AG04450 (cell line): ENCODE measurements at regions of chr10 and their contacts with region 1.

Region 1: GRCh38 chr10:74213571-74214162 is 62.6 kb downstream of the ADK start:
- DNase-seq: no peak
- H3K4me3 ChIP-seq: no peak overlapping the region
- H3K27ac ChIP-seq: no peak overlapping the region
- H3K27me3 ChIP-seq: no peaks in the 10 kb centered on the region
- CTCF ChIP-seq: peak; percentile 65

Region 2: GRCh38 chr10:73879296-73880173 is 334.1 kb before region 1 on chr10:
- CTCF ChIA-PET with region 1: no interaction called
- POLR2A ChIA-PET with region 1: no interaction called
- DNase-seq: no peak
- H3K4me3 ChIP-seq: no peak overlapping the region
- H3K27ac ChIP-seq: no peak overlapping the region
- H3K27me3 ChIP-seq: no peaks in the 10 kb centered on the region
- CTCF ChIP-seq: peak; percentile 91

Region 3: DNA sequence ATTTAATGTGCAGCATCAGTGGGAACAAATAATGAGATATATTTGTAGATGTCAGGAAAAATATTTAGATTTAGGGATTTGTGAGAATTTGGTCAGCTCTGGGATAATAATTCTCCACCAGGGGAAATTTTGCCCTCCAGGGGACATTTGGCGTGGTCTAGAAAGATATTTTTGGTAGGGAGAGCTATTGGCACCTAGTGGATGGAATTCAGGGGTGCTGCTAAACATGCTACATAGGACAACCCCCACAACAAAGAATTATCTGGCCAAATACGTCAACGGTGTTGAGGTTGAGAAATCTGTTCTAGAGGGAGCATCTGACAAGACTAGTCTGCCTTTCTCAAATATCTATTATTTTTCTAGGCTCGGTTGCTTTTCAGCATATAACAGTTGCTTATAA is 60.5 kb before region 1 on chr10:
- CTCF ChIA-PET with region 1: interaction called, 10 read pairs
- POLR2A ChIA-PET with region 1: no interaction called
- DNase-seq: no peak
- H3K4me3 ChIP-seq: no peak overlapping the region
- H3K27ac ChIP-seq: no peak overlapping the region
- H3K27me3 ChIP-seq: no peaks in the 10 kb centered on the region
- CTCF ChIP-seq: peak; percentile 73

Region 4: DNA sequence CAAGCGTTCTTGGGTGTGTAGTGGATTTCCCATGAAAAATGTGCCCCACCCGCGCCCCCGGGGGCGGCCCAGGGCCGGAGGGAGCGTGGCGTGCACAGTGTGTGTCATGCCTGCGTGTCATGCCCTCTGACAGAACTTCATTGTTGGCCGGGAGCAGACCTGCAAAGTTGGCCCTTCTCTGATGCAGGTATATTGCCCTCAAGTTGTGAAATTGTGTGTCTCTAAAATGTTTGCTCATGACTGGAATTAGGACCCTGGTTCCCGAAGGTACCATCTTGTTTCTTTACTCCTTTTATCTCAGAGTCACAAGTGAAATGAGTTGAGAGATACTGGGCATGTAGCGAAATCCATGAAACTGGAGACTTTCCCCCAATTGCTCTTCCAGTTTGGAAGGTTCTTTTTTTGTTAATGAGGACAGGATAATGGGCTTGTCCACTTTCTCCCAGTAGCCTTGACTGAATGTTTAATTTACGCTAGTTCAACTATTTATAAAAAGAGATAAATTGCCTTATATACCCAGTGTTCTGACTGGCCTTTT is 36.5 kb before region 1 on chr10:
- CTCF ChIA-PET with region 1: interaction called, 11 read pairs
- POLR2A ChIA-PET with region 1: no interaction called
- DNase-seq: no peak
- H3K4me3 ChIP-seq: peak overlapping the region; percentile 99
- H3K27ac ChIP-seq: peak overlapping the region; percentile 83
- H3K27me3 ChIP-seq: no peaks in the 10 kb centered on the region
- CTCF ChIP-seq: no peak

Region 5: DNA sequence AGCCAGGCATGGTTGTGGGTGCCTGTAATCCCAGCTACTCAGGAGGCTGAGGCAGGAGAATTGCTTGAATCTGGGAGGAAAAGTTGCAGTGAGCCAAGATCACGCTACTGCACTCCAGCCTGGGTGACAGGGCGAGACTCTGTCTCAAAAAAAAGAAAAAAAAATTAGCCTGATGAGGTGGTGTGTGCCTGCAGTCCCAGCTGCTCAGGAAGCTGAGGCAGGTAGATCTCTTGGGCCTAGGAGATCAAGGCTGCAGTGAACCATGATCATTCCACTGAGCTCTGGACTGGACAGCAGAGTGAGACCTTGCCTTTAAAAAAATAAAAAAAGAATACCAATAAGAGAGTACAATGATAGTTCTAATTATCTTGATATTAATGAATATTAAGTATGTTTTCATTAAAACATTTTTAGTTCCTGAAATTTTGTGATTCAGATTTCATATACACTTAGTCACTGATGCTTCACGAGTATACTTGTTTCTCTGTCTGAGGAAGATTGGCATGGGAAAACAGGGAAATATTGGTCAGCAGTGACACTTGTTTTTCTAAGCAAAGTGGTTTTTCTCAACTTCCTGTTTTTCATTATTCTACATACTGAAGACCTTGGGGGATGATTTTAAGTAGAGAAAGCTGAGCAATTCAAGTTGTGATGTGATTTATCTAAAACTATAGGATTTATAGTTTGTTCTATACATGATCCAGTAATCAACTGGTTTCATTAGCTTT is 14.2 kb after region 1 on chr10:
- CTCF ChIA-PET with region 1: interaction called, 11 read pairs
- POLR2A ChIA-PET with region 1: no interaction called
- DNase-seq: no peak
- H3K4me3 ChIP-seq: no peak overlapping the region
- H3K27ac ChIP-seq: no peak overlapping the region
- H3K27me3 ChIP-seq: no peaks in the 10 kb centered on the region
- CTCF ChIP-seq: no peak

Region 6: GRCh38 chr10:74234569-74234968 is 20.9 kb after region 1 on chr10:
- CTCF ChIA-PET with region 1: interaction called, 18 read pairs
- POLR2A ChIA-PET with region 1: no interaction called
- DNase-seq: no peak
- H3K4me3 ChIP-seq: no peak overlapping the region
- H3K27ac ChIP-seq: no peak overlapping the region
- H3K27me3 ChIP-seq: no peaks in the 10 kb centered on the region
- CTCF ChIP-seq: peak; percentile 51

Region 7: GRCh38 chr10:74400186-74400585 is 186.5 kb after region 1 on chr10:
- CTCF ChIA-PET with region 1: no interaction called
- POLR2A ChIA-PET with region 1: no interaction called
- DNase-seq: no peak
- H3K4me3 ChIP-seq: no peak overlapping the region
- H3K27ac ChIP-seq: no peak overlapping the region
- H3K27me3 ChIP-seq: no peaks in the 10 kb centered on the region
- CTCF ChIP-seq: no peak